MCF 10A (cell line): ENCODE measurements at regions of chr20 and their contacts with region 1.

Region 1: GRCh38 chr20:52959125-52959524 is 13.0 kb upstream of the TSHZ2 start:
- DNase-seq: no peak
- H3K4me3 Mint-ChIP-seq: no peak overlapping the region
- H3K27ac Mint-ChIP-seq: no peak overlapping the region
- H3K4me1 Mint-ChIP-seq: peaks cover 3% of the 10 kb centered on the region
- H3K27me3 Mint-ChIP-seq: no peaks in the 10 kb centered on the region
- CTCF ChIP-seq: peak; percentile 13

Region 2: GRCh38 chr20:52747845-52748284 is 211.3 kb before region 1 on chr20:
- CTCF ChIA-PET with region 1: interaction called, 6 read pairs
- POLR2A ChIA-PET with region 1: no interaction called
- intact Hi-C with region 1: loop called (anchors 5 kb)
- DNase-seq: peak; percentile 13
- H3K4me3 Mint-ChIP-seq: no peak overlapping the region
- H3K27ac Mint-ChIP-seq: no peak overlapping the region
- H3K4me1 Mint-ChIP-seq: no peaks in the 10 kb centered on the region
- H3K27me3 Mint-ChIP-seq: peaks cover 16% of the 10 kb centered on the region
- CTCF ChIP-seq: peak; percentile 47

Region 3: GRCh38 chr20:53226826-53227225 is 267.7 kb after region 1 on chr20:
- CTCF ChIA-PET with region 1: no interaction called
- POLR2A ChIA-PET with region 1: no interaction called
- intact Hi-C with region 1: no loop called
- DNase-seq: no peak
- H3K4me3 Mint-ChIP-seq: no peak overlapping the region
- H3K27ac Mint-ChIP-seq: no peak overlapping the region
- H3K4me1 Mint-ChIP-seq: peaks cover 11% of the 10 kb centered on the region
- H3K27me3 Mint-ChIP-seq: no peaks in the 10 kb centered on the region
- CTCF ChIP-seq: no peak